H1 (cell line): ENCODE measurements at regions of chr11 and their contacts with region 1.

Region 1: GRCh38 chr11:64152841-64153691 is 12.8 kb downstream of the MACROD1 start:
- DNase-seq: peak in 1 of 2 experiments; percentile 94
- H3K4me3 ChIP-seq: no peak overlapping the region
- H3K27ac ChIP-seq: no peak overlapping the region
- H3K4me1 ChIP-seq: peaks cover 2 to 19% (median 10%) of the 10 kb centered on the region in 4 experiments; a peak in 6 of 7 replicates
- H3K27me3 ChIP-seq: peaks cover 0 to 16% (median 0%) of the 10 kb centered on the region in 4 experiments; a peak in 2 of 7 replicates
- CTCF ChIP-seq: peak in 2 of 3 experiments; percentile 94 to 95; a peak in 3 of 4 replicates
- EP300 ChIP-seq: no peak
- POLR2A ChIP-seq: no peak
- RAD21 ChIP-seq: peak; percentile 80 to 89

Region 2: GRCh38 chr11:64007629-64008282 is 145.3 kb before region 1 on chr11:
- CTCF ChIA-PET with region 1: interaction called, 171 read pairs
- POLR2A ChIA-PET with region 1: no interaction called
- DNase-seq: peak in 1 of 2 experiments; percentile 73
- H3K4me3 ChIP-seq: peak overlapping the region; percentile 21 to 57 (median 34); a peak in 7 of 8 replicates
- H3K27ac ChIP-seq: no peak overlapping the region
- H3K4me1 ChIP-seq: peaks cover 0 to 15% (median 10%) of the 10 kb centered on the region in 4 experiments; a peak in 5 of 7 replicates
- H3K27me3 ChIP-seq: peaks cover 28 to 89% (median 72%) of the 10 kb centered on the region in 4 experiments
- CTCF ChIP-seq: peak in 1 of 3 experiments; percentile 24; a peak in 1 of 4 replicates
- EP300 ChIP-seq: no peak
- POLR2A ChIP-seq: no peak
- RAD21 ChIP-seq: peak in 1 of 2 experiments; percentile 16; a peak in 1 of 4 replicates

Region 3: DNA sequence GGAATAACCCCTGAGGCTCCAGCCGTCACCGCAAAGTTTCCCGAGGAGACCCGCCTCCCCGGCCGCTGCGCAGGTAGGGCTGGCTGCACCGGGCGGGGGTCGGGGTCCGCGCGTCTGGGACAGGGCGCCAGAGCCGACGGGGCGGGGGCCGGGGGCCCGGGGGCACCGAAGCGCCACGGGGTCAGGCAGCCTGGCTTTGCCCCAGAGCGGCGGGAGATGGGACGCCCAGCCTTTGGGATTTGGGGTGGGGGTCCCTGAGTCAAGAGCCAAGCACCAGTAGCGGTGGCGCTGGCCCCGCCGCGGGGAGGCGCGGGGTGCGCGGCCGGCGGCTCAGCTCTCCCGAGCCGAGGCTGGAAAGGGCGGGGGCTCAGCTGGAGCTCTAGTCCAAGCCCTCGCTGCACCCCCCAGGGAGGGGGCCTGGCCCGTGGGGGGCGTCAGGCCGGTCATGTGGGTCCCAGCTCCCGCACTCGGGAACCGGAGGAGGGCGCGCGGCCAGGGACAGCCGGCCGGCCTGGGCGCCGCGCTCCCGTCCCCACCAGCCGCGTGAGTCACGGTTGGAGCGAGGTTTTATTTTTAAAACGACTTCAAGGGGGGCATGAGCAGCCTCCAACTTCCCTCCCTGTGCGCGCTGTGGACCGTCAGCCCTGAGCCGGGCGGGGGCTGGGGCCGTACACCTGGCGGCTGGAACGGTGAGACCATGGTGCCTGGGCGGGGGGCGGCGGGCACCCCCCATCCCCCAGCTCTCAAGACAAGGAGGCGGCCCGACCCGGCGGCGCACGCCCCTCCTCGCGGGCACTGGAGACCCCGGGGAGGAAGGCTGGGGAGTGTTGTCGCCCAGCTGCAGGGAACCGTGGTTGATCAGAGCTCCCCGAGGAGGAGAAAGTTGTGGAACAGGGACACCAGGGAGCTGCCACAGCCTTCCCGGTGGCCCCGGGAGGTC is 116.7 kb before region 1 on chr11:
- CTCF ChIA-PET with region 1: interaction called, 291 read pairs
- POLR2A ChIA-PET with region 1: no interaction called
- DNase-seq: no peak
- H3K4me3 ChIP-seq: peak overlapping the region; percentile 27 to 67 (median 42)
- H3K27ac ChIP-seq: no peak overlapping the region
- H3K4me1 ChIP-seq: peaks cover 5 to 16% (median 10%) of the 10 kb centered on the region in 4 experiments; a peak in 6 of 7 replicates
- H3K27me3 ChIP-seq: peaks cover 59 to 92% (median 83%) of the 10 kb centered on the region in 4 experiments
- CTCF ChIP-seq: no peak
- EP300 ChIP-seq: no peak
- POLR2A ChIP-seq: no peak
- RAD21 ChIP-seq: no peak

Region 4: DNA sequence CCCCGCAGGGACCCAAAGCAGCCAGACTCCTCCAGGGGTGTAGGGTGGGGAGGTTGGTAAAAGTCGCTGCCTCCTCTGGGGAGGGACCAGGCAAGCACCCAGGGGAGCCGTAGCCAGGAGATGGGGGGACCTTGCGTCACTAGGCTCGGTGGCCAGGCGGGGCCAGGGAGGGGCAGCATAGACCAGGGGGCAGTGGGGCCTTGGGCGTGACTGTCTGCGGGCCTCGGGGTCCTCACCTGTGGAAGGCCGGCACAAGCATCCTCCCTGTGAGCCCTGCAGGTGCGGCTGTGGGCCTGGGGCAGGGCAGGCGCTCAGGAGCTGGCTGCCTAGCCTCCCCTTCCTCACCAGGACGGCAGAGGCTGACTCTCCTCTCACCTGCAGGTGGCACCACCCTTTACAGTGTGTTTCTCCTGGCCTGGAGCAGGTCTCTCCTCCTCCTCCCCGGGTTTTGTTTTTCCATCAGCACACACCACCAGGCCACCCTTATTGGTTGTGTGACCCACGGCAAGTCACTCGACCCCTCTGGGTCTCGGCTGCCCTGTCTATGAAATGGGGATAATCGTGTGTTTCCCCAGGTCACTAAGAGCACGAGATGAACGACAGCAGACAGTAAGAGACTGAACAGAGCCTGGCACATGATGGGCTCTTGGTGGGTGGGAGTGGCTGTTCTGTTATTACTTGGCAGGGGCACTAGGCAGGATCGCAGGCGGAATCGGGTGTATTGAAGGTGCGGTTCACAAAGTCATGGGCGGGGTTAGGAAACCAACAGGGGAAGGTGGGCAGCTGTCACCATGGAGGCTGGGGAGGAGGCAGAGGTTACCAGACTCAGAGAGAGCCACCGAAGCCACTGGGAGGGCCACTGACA is 64.7 kb before region 1 on chr11:
- CTCF ChIA-PET with region 1: interaction called, 126 read pairs
- POLR2A ChIA-PET with region 1: no interaction called
- DNase-seq: peak; percentile 38 to 72
- H3K4me3 ChIP-seq: no peak overlapping the region
- H3K27ac ChIP-seq: no peak overlapping the region
- H3K4me1 ChIP-seq: peaks cover 0 to 8% (median 5%) of the 10 kb centered on the region in 4 experiments; a peak in 6 of 7 replicates
- H3K27me3 ChIP-seq: peaks cover 2 to 60% (median 31%) of the 10 kb centered on the region in 4 experiments
- CTCF ChIP-seq: peak in 2 of 3 experiments; percentile 82 to 85; a peak in 3 of 4 replicates
- EP300 ChIP-seq: no peak
- POLR2A ChIP-seq: no peak
- RAD21 ChIP-seq: peak; percentile 63 to 70

Region 5: GRCh38 chr11:64120951-64121569 is 32.0 kb before region 1 on chr11:
- CTCF ChIA-PET with region 1: interaction called, 21 read pairs
- POLR2A ChIA-PET with region 1: no interaction called
- DNase-seq: no peak
- H3K4me3 ChIP-seq: no peak overlapping the region
- H3K27ac ChIP-seq: no peak overlapping the region
- H3K4me1 ChIP-seq: peaks cover 0 to 24% (median 17%) of the 10 kb centered on the region in 4 experiments; a peak in 6 of 7 replicates
- H3K27me3 ChIP-seq: peaks cover 0 to 13% (median 5%) of the 10 kb centered on the region in 4 experiments; a peak in 5 of 7 replicates
- CTCF ChIP-seq: no peak
- EP300 ChIP-seq: no peak
- POLR2A ChIP-seq: no peak
- RAD21 ChIP-seq: no peak

Region 6: GRCh38 chr11:64165849-64166635 is 13.0 kb after region 1 on chr11 and contains the start of gene MACROD1:
- CTCF ChIA-PET with region 1: interaction called, 50 read pairs
- POLR2A ChIA-PET with region 1: interaction called, 5 read pairs
- DNase-seq: peak in 1 of 2 experiments; percentile 84
- H3K4me3 ChIP-seq: peak within 1 kb of the TSS; percentile 52 to 77 (median 64)
- H3K27ac ChIP-seq: no peak within 1 kb of the TSS
- H3K4me1 ChIP-seq: peaks cover 0 to 11% (median 9%) of the 10 kb centered on the region in 4 experiments; a peak in 6 of 7 replicates
- H3K27me3 ChIP-seq: peaks cover 0 to 3% (median 0%) of the 10 kb centered on the region in 4 experiments; a peak in 2 of 7 replicates
- CTCF ChIP-seq: no peak
- EP300 ChIP-seq: peak in 1 of 2 experiments; percentile 60; a peak in 1 of 3 replicates
- POLR2A ChIP-seq: peak in 1 of 2 experiments; percentile 52; a peak in 1 of 3 replicates
- RAD21 ChIP-seq: peak in 1 of 2 experiments; percentile 9; a peak in 1 of 4 replicates
- total RNA-seq, gene MACROD1: 19.5 and 19.6 TPM in 2 replicates

Region 7: GRCh38 chr11:64225612-64226506 is 72.8 kb after region 1 on chr11 and contains the starts of genes NUDT22 and TRPT1:
- CTCF ChIA-PET with region 1: no interaction called
- POLR2A ChIA-PET with region 1: no interaction called
- DNase-seq: peak in 1 of 2 experiments; percentile 97
- H3K4me3 ChIP-seq: peak within 1 kb of the TSS; percentile 63 to 90 (median 84)
- H3K27ac ChIP-seq: peak within 1 kb of the TSS; percentile 11; the same call in 1 of the 2 replicates
- H3K4me1 ChIP-seq: peaks cover 0 to 23% (median 14%) of the 10 kb centered on the region in 4 experiments; a peak in 6 of 7 replicates
- H3K27me3 ChIP-seq: no peaks in the 10 kb centered on the region
- CTCF ChIP-seq: peak in 1 of 3 experiments; percentile 48; a peak in 1 of 4 replicates
- EP300 ChIP-seq: no peak
- POLR2A ChIP-seq: peak in 1 of 2 experiments; percentile 44; a peak in 2 of 3 replicates
- RAD21 ChIP-seq: no peak; a peak in 2 of 4 replicates
- total RNA-seq, gene NUDT22: 43.4 and 51.5 TPM in 2 replicates
- total RNA-seq, gene TRPT1: 34.5 and 39.7 TPM in 2 replicates

Region 8: GRCh38 chr11:64251016-64251752 is 98.1 kb after region 1 on chr11 and contains the start of gene PLCB3:
- CTCF ChIA-PET with region 1: no interaction called
- POLR2A ChIA-PET with region 1: no interaction called
- DNase-seq: peak in 1 of 2 experiments; percentile 86
- H3K4me3 ChIP-seq: peak within 1 kb of the TSS; percentile 73 to 86 (median 76)
- H3K27ac ChIP-seq: peak within 1 kb of the TSS; percentile 72; the same call in 1 of the 2 replicates
- H3K4me1 ChIP-seq: peaks cover 0 to 40% (median 34%) of the 10 kb centered on the region in 4 experiments; a peak in 6 of 7 replicates
- H3K27me3 ChIP-seq: no peaks in the 10 kb centered on the region
- CTCF ChIP-seq: peak in 2 of 3 experiments; percentile 48 to 80; a peak in 3 of 4 replicates
- EP300 ChIP-seq: no peak; a peak in 1 of 3 replicates
- POLR2A ChIP-seq: peak in 1 of 2 experiments; percentile 65; a peak in 2 of 3 replicates
- RAD21 ChIP-seq: peak in 1 of 2 experiments; percentile 13; a peak in 1 of 4 replicates
- total RNA-seq, gene PLCB3: 104 TPM in 2 replicates